Naive thymus-derived CD4-positive, alpha-beta T cell (primary cell): ENCODE measurements at regions of chr11 and their contacts with region 1.

Region 1: DNA sequence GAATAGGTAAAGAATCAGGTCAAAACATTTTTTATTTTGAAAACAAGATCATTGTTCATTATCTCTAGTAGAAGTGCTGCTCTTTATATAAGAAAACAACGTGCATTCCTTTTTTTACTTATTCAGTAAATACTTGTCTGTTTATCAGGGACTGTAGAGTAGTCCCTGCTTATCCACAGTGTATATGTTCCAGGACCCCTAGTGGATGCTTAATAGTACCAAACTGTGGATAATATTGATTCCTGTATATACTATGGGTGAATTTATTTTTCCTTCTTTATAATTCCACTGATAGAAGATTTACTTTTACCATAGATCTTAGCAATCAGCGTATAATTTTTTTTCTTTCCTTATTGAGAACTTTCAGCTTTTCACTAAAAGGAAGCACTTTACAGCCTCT is 32.6 kb downstream of the CEP295 start:
- DNase-seq: no peak
- ATAC-seq: no peak
- H3K4me3 ChIP-seq: no peak overlapping the region
- H3K4me3 Mint-ChIP-seq: no peak overlapping the region
- H3K27ac ChIP-seq: no peak overlapping the region
- H3K27ac Mint-ChIP-seq: no peak overlapping the region
- H3K4me1 ChIP-seq: no peaks in the 10 kb centered on the region
- H3K4me1 Mint-ChIP-seq: peaks cover 0 to 8% (median 0%) of the 10 kb centered on the region in 7 donors
- H3K27me3 ChIP-seq: no peaks in the 10 kb centered on the region
- H3K27me3 Mint-ChIP-seq: no peaks in the 10 kb centered on the region

Region 2: DNA sequence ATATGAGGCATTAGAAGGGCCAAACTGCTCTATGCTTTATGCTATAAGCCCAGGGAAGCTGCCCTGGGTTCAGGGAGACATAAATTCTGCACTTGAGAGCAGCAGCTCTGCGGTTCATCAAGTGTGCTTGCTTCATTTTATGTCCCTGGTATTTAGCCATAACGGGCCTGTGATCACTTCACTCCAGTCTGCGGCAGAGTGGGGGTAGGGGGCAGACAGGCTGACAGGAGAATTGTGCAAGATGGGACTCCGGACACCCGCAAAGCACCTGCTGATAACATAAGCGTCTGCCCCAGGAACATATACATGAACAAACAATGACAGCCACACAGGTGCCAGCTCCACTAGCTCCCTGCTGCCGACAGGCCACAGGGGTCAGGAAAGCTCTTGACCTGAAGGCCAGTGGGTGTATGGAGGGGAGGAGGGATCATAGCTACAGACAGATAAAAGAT is 207.1 kb before region 1 on chr11:
- CTCF ChIA-PET with region 1: no interaction called
- POLR2A ChIA-PET with region 1: no interaction called
- intact Hi-C with region 1: no loop called
- DNase-seq: no peak
- ATAC-seq: no peak
- H3K4me3 ChIP-seq: no peak overlapping the region
- H3K4me3 Mint-ChIP-seq: no peak overlapping the region
- H3K27ac ChIP-seq: no peak overlapping the region
- H3K27ac Mint-ChIP-seq: no peak overlapping the region
- H3K4me1 ChIP-seq: no peaks in the 10 kb centered on the region
- H3K4me1 Mint-ChIP-seq: no peaks in the 10 kb centered on the region
- H3K27me3 ChIP-seq: no peaks in the 10 kb centered on the region
- H3K27me3 Mint-ChIP-seq: no peaks in the 10 kb centered on the region

Region 3: GRCh38 chr11:93727985-93728791 is 34.1 kb after region 1 on chr11:
- CTCF ChIA-PET with region 1: no interaction called
- POLR2A ChIA-PET with region 1: no interaction called
- intact Hi-C with region 1: loop called in 1 of 2 experiments (anchors 5 kb)
- DNase-seq: no peak
- ATAC-seq: no peak
- H3K4me3 ChIP-seq: no peak overlapping the region
- H3K4me3 Mint-ChIP-seq: no peak overlapping the region
- H3K27ac ChIP-seq: no peak overlapping the region
- H3K27ac Mint-ChIP-seq: peak overlapping the region in 6 of 9 donors; percentile 31 to 79 (median 49)
- H3K4me1 ChIP-seq: peaks cover 0 to 3% of the 10 kb centered on the region in 2 donors
- H3K4me1 Mint-ChIP-seq: peaks cover 0 to 21% (median 3%) of the 10 kb centered on the region in 7 donors
- H3K27me3 ChIP-seq: no peaks in the 10 kb centered on the region
- H3K27me3 Mint-ChIP-seq: no peaks in the 10 kb centered on the region

Region 4: GRCh38 chr11:94107363-94107762 is 413.3 kb after region 1 on chr11:
- CTCF ChIA-PET with region 1: no interaction called
- POLR2A ChIA-PET with region 1: no interaction called
- intact Hi-C with region 1: no loop called
- DNase-seq: no peak
- ATAC-seq: no peak
- H3K4me3 ChIP-seq: no peak overlapping the region
- H3K4me3 Mint-ChIP-seq: no peak overlapping the region
- H3K27ac ChIP-seq: no peak overlapping the region
- H3K27ac Mint-ChIP-seq: no peak overlapping the region
- H3K4me1 ChIP-seq: no peaks in the 10 kb centered on the region
- H3K4me1 Mint-ChIP-seq: no peaks in the 10 kb centered on the region
- H3K27me3 ChIP-seq: no peaks in the 10 kb centered on the region
- H3K27me3 Mint-ChIP-seq: peaks cover 9 to 17% (median 16%) of the 10 kb centered on the region in 5 donors